Lower leg skin (tissue), 4 donors: ENCODE measurements at regions of chr15 and their contacts with region 1.

Region 1: DNA sequence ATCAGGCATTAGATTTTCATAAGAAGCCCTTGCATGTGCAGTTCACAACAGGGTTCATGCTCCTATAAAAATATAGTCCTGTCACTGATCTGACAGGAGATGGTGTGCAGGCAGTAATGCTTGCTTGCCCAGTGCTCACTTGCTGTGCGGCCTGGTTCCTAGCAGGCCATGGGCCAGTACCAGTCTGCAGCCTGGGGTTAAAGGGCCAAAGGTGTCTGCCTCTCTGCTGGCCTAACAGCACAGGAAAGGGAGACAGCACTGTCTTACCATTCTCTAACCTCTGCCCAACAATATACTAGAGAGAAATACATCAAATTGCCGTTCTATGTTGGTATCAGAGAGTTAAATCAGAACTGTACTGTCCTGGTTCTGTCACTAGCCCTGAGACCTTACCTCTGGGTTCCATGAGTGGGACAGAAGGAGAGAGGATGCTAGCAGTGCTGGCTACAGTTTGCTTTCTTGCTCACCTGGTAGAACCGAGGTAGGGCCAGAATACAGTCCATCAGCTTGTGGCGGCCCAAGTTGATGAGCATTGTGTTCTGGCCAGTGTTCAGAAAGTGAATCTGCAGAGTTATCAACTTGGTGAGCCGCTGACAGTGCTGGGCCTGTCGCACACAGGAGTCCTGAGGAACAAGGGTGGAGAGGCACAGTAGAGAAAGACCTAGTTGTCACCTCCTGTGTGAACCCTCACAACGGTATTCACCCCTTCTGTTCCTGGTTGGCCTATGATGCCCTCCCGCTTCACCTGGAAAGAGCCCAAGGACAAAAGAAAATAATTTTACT is 28.6 kb downstream of the EIF3J start:
- DNase-seq: no peak
- H3K4me3 ChIP-seq: no peak overlapping the region
- CTCF ChIP-seq: no peak
- POLR2A ChIP-seq: no peak

Region 2: GRCh38 chr15:44620081-44620480 is 54.5 kb after region 1 on chr15:
- intact Hi-C with region 1: loop called (anchors 10 kb)
- DNase-seq: no peak
- H3K4me3 ChIP-seq: no peak overlapping the region
- CTCF ChIP-seq: no peak
- POLR2A ChIP-seq: no peak